Activated B cell treated with CpG ODN at 0.5 μM for 24 hours (primary cell): ENCODE measurements at regions of chr18 and their contacts with region 1.

Region 1: DNA sequence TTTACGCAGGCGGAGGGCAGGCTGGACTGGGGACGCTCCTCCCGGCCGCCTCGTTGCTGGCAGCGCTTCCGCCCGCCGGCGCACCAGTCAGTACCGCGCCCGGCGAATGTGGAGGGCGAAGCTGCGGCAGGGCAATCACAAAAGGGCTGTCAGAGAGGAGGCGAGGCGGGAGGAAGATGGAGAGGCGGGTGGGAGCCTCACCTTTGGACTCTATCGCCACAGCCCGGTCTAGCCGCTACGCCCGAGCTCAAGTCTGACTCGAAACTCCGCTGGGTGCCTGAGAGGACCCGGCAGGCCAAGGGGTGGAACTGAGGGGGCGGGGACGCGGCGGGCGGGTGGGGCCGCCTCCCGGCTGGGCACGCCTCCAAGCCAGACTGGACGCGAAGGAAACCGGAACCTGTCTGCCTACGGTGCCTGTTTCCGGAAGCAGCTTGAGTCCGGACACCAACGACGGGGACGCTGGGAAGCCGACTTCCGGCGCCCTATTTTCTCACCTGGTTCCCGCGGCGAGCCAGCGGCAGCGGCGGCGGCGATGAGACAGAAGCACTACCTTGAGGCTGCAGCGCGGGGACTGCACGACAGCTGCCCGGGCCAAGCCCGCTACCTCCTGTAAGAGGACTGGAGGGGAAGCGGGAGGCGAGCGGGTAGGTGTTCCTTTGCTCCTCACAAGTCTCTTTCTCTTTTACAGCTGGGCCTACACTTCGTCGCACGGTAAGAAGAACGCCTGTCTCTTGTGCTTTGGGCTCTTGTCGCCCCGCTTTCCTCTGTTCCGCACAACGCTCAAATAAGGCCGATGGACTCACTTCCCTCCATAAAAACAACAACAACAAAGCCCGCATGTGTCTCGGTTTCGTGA is at the start of gene RMP24:
- DNase-seq: peak; percentile 85
- ATAC-seq: peak; percentile 94
- H3K4me3 Mint-ChIP-seq: peak within 1 kb of the TSS; percentile 98
- H3K27ac Mint-ChIP-seq: peak within 1 kb of the TSS; percentile 97
- H3K4me1 Mint-ChIP-seq: peaks cover 50% of the 10 kb centered on the region
- H3K27me3 Mint-ChIP-seq: no peaks in the 10 kb centered on the region
- CTCF ChIP-seq: no peak

Region 2: DNA sequence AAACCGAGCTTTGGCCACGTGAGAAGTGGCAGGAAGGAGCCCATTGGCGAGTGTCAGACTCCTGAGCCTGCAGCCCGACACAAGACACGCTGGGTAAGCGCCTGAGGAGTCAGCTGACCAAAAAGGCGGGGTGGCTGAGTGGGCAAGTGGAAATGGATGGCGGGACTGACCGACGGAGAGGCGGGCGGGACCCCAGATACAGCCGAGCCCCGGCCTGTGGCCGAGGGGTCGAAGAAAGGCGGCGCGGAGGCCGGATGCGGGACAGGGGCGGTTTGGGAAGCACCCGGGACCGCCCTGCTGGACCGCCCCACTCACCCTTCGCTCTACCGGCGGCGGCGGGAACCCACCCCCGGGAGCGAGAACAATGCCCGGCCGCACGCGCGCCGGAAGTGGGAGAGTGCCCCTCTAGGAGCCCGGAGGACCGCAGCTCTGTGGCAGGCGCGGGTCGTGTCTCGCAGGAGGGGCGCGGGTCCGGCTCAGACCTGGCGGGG is 705.2 kb before region 1 on chr18:
- CTCF ChIA-PET with region 1: no interaction called
- POLR2A ChIA-PET with region 1: interaction called, 12 read pairs
- intact Hi-C with region 1: no loop called
- DNase-seq: peak; percentile 72
- ATAC-seq: peak; percentile 89
- H3K4me3 Mint-ChIP-seq: peak overlapping the region; percentile 94
- H3K27ac Mint-ChIP-seq: peak overlapping the region; percentile 93
- H3K4me1 Mint-ChIP-seq: peaks cover 26% of the 10 kb centered on the region
- H3K27me3 Mint-ChIP-seq: no peaks in the 10 kb centered on the region
- CTCF ChIP-seq: no peak

Region 3: GRCh38 chr18:35376742-35377695 is 595.4 kb before region 1 on chr18 and contains the start of gene ZNF396:
- CTCF ChIA-PET with region 1: no interaction called
- POLR2A ChIA-PET with region 1: no interaction called
- intact Hi-C with region 1: loop called (anchors 1 kb)
- DNase-seq: peak; percentile 68
- ATAC-seq: peak; percentile 72
- H3K4me3 Mint-ChIP-seq: peak within 1 kb of the TSS; percentile 89
- H3K27ac Mint-ChIP-seq: peak within 1 kb of the TSS; percentile 47
- H3K4me1 Mint-ChIP-seq: peaks cover 11% of the 10 kb centered on the region
- H3K27me3 Mint-ChIP-seq: no peaks in the 10 kb centered on the region
- CTCF ChIP-seq: no peak
- total RNA-seq, gene ZNF396: 1.5 and 2.2 TPM in 2 replicates

Region 4: GRCh38 chr18:35580701-35581539 is 391.5 kb before region 1 on chr18:
- CTCF ChIA-PET with region 1: no interaction called
- POLR2A ChIA-PET with region 1: interaction called, 8 read pairs
- intact Hi-C with region 1: loop called (anchors 1 kb)
- DNase-seq: peak; percentile 73
- ATAC-seq: peak; percentile 71
- H3K4me3 Mint-ChIP-seq: peak overlapping the region; percentile 79
- H3K27ac Mint-ChIP-seq: peak overlapping the region; percentile 83
- H3K4me1 Mint-ChIP-seq: peaks cover 42% of the 10 kb centered on the region
- H3K27me3 Mint-ChIP-seq: no peaks in the 10 kb centered on the region
- CTCF ChIP-seq: no peak

Region 5: DNA sequence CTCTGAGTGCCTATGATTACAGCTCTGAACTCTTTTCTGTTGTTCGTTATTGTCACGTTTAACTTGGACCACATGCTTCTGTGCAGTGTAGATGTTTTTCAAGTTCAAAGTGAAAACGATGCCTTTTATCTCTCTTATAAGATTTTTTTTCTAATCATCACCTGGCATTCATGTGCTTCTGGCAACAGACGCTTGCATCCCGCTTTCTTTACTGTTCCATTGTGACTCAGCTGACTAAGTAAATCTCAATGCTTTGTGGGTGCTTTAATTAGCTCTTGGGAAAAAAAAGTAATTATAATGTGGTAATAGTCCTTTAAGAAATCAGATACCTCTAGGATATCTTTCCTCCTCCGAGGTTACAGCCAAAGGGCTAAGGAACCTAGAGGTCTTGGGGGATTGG is 31.1 kb before region 1 on chr18:
- CTCF ChIA-PET with region 1: no interaction called
- POLR2A ChIA-PET with region 1: no interaction called
- intact Hi-C with region 1: no loop called
- DNase-seq: no peak
- ATAC-seq: no peak
- H3K4me3 Mint-ChIP-seq: no peak overlapping the region
- H3K27ac Mint-ChIP-seq: no peak overlapping the region
- H3K4me1 Mint-ChIP-seq: no peaks in the 10 kb centered on the region
- H3K27me3 Mint-ChIP-seq: peaks cover 10% of the 10 kb centered on the region
- CTCF ChIP-seq: no peak

Region 6: DNA sequence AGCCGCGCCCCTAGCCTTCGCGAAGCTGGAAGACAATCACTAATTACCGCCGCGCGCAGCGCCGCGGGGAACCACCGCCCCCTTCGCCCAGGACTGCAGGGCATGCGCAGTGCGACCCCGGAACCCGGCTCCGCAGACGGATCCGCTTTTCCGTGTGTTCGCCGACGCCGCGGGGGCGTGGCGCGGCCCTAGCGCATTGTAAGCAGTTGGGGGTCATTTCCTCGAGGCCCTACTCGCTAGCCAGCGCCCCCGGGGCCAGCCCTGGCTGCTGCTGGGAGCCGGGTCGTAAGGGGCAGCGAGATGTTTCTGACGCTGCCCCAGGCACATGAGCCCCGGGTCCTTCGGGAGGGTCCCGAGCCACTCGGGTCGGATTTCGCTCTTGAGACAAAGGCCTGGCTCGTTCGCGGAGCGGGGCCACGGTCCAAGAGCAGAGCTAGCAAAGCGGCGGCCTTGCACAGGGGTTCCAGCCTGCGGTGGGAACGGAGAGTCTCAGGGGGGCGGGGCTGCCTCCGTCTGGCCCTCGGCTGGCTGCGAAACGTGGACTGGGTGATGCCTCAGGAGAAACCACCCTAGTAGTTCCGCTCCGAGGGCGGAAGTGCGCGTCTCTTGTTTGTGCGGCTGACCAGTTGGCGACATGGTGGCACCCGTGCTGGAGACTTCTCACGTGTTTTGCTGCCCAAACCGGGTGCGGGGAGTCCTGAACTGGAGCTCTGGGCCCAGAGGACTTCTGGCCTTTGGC is 157.0 kb after region 1 on chr18 and contains the starts of genes ELP2 and SLC39A6:
- CTCF ChIA-PET with region 1: no interaction called
- POLR2A ChIA-PET with region 1: interaction called, 8 read pairs
- intact Hi-C with region 1: loop called (anchors 1 kb)
- DNase-seq: peak; percentile 97
- ATAC-seq: peak; percentile 87
- H3K4me3 Mint-ChIP-seq: peak within 1 kb of the TSS; percentile 94
- H3K27ac Mint-ChIP-seq: peak within 1 kb of the TSS; percentile 92
- H3K4me1 Mint-ChIP-seq: peaks cover 57% of the 10 kb centered on the region
- H3K27me3 Mint-ChIP-seq: no peaks in the 10 kb centered on the region
- CTCF ChIP-seq: no peak
- total RNA-seq, gene ELP2: 105 and 124 TPM in 2 replicates
- total RNA-seq, gene SLC39A6: 17.6 and 18.6 TPM in 2 replicates

Region 7: GRCh38 chr18:36333414-36333813 is 361.0 kb after region 1 on chr18:
- CTCF ChIA-PET with region 1: no interaction called
- POLR2A ChIA-PET with region 1: no interaction called
- intact Hi-C with region 1: no loop called
- DNase-seq: no peak
- ATAC-seq: no peak
- H3K4me3 Mint-ChIP-seq: no peak overlapping the region
- H3K27ac Mint-ChIP-seq: no peak overlapping the region
- H3K4me1 Mint-ChIP-seq: no peaks in the 10 kb centered on the region
- H3K27me3 Mint-ChIP-seq: peaks cover 16% of the 10 kb centered on the region
- CTCF ChIP-seq: no peak